ENCODE measurements at regions of chr16 and their contacts with region 1.

Region 1: GRCh38 chr16:66315210-66315825 is 51.2 kb upstream of the CDH5 start:
- DNase-seq: peak; percentile 38 to 94 (median 66)

Region 2: DNA sequence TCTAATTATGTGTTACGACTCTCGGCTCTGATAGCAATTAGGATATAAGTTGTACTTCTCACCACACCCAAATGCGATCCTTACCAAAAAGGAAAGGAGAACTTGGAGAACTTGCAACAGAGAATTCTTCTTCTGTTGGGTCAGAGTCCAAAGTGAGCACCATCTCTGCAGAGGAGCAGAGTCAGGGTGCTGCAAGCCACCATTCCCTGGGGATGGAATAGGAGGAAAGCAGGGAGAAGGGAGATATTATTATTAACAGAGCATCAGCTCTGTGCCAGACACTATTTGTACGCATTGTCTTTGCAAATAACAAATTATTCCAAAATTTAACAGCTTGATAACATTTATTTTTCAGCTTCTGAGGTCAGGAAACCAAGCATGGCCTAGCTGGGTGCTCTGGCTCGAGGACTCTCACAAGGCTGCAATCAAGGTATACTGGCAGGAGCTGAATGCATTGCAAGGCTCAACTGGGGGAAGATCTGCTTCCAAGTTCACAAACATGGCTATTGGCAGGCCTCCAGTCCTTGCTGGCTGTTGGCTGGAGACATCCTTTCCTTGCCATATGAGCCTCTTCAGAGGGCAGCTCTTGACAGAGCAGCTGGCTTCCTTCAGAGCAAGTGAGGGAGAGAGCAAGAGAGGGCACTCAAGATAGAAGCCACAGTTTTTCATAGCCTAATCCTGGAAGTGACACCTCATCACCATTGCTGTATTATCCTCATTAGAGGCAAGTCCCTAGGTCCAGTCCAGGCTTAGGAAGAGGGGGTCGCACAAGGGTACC is 245.0 kb before region 1 on chr16:
- intact Hi-C with region 1: no loop called
- DNase-seq: peak in 4 of 10 donors; percentile 17 to 48 (median 34)

Region 3: GRCh38 chr16:66275775-66276428 is 39.4 kb before region 1 on chr16:
- intact Hi-C with region 1: loop called (anchors 2 kb)
- DNase-seq: peak in 1 of 10 donors; percentile 28

Region 4: GRCh38 chr16:66289051-66289680 is 26.2 kb before region 1 on chr16:
- intact Hi-C with region 1: no loop called
- DNase-seq: peak in 1 of 10 donors; percentile 58

Measured in posterior cingulate gyrus (tissue), 11 donors.